MCF 10A (cell line): ENCODE measurements at regions of chr1 and their contacts with region 1.

Region 1: DNA sequence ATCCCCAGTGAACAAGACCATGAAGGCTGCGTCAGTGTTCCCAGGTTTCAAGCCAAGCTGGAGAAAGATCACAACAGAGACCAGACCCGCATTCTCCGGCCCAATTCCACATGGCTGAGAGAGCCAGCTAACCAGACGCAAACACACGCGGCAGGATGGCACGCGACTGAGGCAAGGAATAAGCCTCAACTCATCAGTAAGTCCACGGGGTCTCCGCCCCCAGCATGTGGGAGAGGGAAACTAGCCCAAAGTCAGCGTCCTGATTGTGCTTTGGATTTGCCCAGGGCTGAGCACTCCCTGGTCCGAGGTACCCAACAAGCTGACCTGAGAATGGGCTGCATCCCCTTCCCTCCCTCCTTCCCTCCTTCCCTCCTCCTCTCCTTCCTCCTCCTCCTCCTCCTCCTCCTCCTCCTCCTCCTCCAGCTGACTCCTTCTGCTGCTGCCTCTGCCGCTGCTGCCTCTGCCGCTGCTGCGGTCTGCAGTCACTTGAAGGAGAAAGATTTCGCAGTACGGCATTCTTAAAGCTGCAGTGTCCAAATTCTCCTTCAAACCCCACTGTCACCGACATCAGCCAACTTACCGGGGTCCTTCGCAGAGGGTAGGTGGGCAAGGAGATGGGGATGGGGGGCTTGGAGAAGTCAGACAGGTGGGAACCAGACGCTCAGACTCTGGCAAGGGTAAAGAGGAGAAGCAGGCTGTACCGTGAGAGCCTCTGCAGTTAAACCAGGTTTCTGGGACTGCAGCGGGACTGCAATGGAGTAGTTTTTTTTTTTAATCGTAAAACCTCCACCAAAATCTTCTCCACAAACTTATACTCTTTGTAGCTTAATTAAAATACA is 33.0 kb upstream of the H6PD start:
- DNase-seq: peak; percentile 47
- H3K4me3 Mint-ChIP-seq: peak overlapping the region; percentile 74
- H3K27ac Mint-ChIP-seq: no peak overlapping the region
- H3K4me1 Mint-ChIP-seq: peaks cover 21% of the 10 kb centered on the region
- H3K27me3 Mint-ChIP-seq: peaks cover 11% of the 10 kb centered on the region
- CTCF ChIP-seq: no peak

Region 2: GRCh38 chr1:9181176-9181906 is 20.3 kb before region 1 on chr1:
- CTCF ChIA-PET with region 1: interaction called, 29 read pairs
- POLR2A ChIA-PET with region 1: interaction called, 7 read pairs
- intact Hi-C with region 1: loop called (anchors 1 kb)
- DNase-seq: peak; percentile 75
- H3K4me3 Mint-ChIP-seq: peak overlapping the region; percentile 91
- H3K27ac Mint-ChIP-seq: peak overlapping the region; percentile 93
- H3K4me1 Mint-ChIP-seq: peaks cover 20% of the 10 kb centered on the region
- H3K27me3 Mint-ChIP-seq: no peaks in the 10 kb centered on the region
- CTCF ChIP-seq: peak; percentile 95

Region 3: GRCh38 chr1:9234223-9235095 is 32.8 kb after region 1 on chr1 and contains the start of gene H6PD:
- CTCF ChIA-PET with region 1: interaction called, 4 read pairs
- POLR2A ChIA-PET with region 1: interaction called, 15 read pairs
- intact Hi-C with region 1: no loop called
- DNase-seq: peak; percentile 83
- H3K4me3 Mint-ChIP-seq: peak within 1 kb of the TSS; percentile 79
- H3K27ac Mint-ChIP-seq: peak within 1 kb of the TSS; percentile 76
- H3K4me1 Mint-ChIP-seq: peaks cover 27% of the 10 kb centered on the region
- H3K27me3 Mint-ChIP-seq: no peaks in the 10 kb centered on the region
- CTCF ChIP-seq: peak; percentile 77
- total RNA-seq, gene H6PD: 23.6 and 28.7 TPM in 2 replicates